K562 (cell line): ENCODE measurements at regions of chr2 and their contacts with region 1.

Region 1: DNA sequence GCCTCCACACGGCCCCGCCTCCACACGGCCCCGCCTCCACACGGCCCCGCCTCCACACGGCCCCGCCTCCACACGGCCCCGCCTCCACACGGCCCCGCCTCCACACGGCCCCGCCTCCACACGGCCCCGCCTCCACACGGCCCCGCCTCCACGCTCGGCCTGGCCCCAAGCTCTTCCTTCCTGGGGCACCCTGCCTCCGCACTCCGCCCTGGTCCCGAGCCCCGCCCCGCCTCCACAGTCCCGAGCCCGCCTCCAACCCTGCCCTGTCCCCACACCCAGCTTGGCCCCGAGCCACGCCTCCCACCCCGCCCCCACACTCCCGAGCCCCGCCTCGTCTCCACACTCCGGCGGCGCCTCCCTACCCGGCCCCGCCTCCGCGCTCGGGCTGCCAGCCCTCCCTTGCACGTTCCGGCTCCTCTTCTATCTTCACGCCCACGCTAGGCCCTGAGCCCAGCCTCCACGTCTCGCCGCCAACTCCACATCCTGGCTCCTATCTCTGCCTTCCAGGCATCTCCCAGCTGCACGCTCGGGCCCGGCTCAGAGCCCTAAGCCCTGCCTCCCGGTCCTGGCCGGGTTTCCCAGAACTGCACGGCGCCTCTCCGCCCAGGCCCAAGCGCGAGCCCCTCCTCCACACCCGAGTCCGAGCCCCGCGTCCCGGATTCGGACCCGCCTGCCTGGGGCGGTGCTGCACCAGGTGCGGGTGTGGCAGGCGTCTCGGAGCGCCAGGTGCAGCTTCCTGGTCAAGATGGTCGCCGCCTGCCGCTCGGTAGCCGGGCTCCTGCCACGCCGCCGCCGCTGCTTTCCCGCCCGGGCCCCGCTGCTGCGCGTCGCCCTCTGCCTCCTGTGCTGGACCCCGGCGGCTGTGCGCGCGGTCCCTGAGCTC is at the start of gene TMEM87B:
- DNase-seq: peak; percentile 90 to 99 (median 92)
- ATAC-seq: peak; percentile 84
- H3K4me3 ChIP-seq: peak within 1 kb of the TSS; percentile 68
- H3K27ac ChIP-seq: peak within 1 kb of the TSS; percentile 91
- H3K4me1 ChIP-seq: peaks cover 14 to 26% of the 10 kb centered on the region in 2 experiments; a peak in 4 of 5 replicates
- H3K27me3 ChIP-seq: no peaks in the 10 kb centered on the region
- CTCF ChIP-seq: no peak
- EP300 ChIP-seq: peak; percentile 86
- POLR2A ChIP-seq: peak; percentile 79
- RAD21 ChIP-seq: peak in 1 of 2 experiments; percentile 25; a peak in 1 of 4 replicates
- polyA plus RNA-seq, gene TMEM87B: 3.7 to 5.8 TPM

Region 2: DNA sequence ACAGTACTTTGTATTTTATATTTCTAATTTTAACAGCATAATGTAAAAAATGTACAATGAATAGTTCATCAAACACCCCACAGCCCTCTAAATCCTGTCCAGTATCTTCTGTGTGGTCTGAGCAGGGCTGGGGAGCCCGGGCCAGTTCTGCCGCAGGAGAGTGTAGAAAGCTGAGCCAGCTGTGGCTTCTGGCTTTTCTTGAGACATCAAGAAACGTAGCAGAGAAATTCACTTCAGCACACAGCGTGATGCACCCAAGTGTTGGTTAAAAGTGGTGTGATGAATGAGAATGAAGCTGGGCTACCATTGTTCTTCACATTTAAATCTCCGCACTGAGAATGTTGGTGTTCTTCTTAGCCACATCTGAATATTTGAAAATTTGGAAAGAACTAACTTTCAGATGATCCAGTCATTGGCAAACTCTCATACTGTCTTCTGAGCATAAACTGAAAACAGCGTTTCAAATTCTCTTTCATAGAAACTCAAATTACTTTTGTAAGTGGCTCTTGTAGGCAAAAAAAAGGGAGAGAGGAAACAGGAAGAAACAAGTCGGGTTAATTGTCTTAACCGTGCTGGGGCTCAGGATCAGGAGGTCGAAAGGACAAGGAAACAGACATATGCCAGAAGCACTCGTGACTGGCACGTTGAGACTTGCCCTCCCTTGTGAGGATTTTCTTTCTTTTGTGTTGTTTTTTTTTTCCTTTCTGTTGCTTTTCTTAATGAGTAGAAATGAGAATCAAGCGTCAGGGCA is 23.4 kb before region 1 on chr2:
- CTCF ChIA-PET with region 1: no interaction called
- POLR2A ChIA-PET with region 1: no interaction called
- in situ Hi-C with region 1: no loop called
- intact Hi-C with region 1: no loop called
- DNase-seq: no peak
- ATAC-seq: peak; percentile 52; the same call in 2 of the 3 replicates
- H3K4me3 ChIP-seq: no peak overlapping the region
- H3K27ac ChIP-seq: no peak overlapping the region
- H3K4me1 ChIP-seq: peaks cover 0 to 3% of the 10 kb centered on the region in 2 experiments; a peak in 2 of 5 replicates
- H3K27me3 ChIP-seq: no peaks in the 10 kb centered on the region; a peak in 1 of 5 replicates
- CTCF ChIP-seq: no peak
- EP300 ChIP-seq: no peak
- POLR2A ChIP-seq: no peak
- RAD21 ChIP-seq: no peak

Region 3: DNA sequence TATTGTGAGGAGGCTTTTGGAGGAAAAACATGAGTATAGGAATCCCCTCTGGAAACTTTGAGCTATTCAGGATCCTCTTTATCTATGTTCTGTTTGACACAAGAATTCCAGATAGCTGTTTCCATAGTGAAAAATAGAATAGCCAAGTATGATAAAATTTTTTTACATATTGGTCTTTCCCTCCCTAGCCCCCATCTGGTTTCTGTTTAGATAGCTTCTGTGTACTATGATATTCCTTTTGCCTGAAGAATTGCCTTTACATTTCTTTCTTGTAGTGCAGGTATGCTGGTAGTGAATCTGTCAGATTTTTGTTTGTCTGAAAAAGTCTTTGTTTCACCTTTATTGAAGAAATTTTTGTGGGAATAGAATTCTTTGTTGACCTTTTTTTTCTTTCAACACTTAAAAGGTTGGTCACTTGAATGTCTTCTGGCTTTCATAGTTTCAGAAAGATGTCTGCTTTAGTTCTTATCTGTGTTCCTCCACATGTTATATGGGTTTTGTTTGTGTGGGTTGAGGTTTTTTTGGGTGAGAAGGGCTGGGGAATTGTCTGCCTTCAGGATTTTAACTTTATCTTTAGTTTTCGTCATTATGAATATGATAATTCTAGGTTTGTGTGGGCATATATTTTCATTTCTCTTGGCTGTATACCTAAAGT is 53.2 kb after region 1 on chr2:
- CTCF ChIA-PET with region 1: no interaction called
- POLR2A ChIA-PET with region 1: no interaction called
- in situ Hi-C with region 1: no loop called
- intact Hi-C with region 1: loop called (anchors 5 kb)
- DNase-seq: peak; percentile 25 to 60 (median 44)
- ATAC-seq: peak; percentile 36; the same call in 1 of the 3 replicates
- H3K4me3 ChIP-seq: no peak overlapping the region
- H3K27ac ChIP-seq: peak overlapping the region; percentile 31; the same call in 1 of the 3 replicates
- H3K4me1 ChIP-seq: no peaks in the 10 kb centered on the region
- H3K27me3 ChIP-seq: no peaks in the 10 kb centered on the region
- CTCF ChIP-seq: no peak
- EP300 ChIP-seq: peak; percentile 54; the same call in 1 of the 2 replicates
- POLR2A ChIP-seq: no peak
- RAD21 ChIP-seq: no peak

Region 4: GRCh38 chr2:112121682-112122254 is 66.7 kb after region 1 on chr2:
- CTCF ChIA-PET with region 1: interaction called, 3 read pairs
- POLR2A ChIA-PET with region 1: no interaction called
- in situ Hi-C with region 1: no loop called
- intact Hi-C with region 1: loop called (anchors 5 kb)
- DNase-seq: peak in 1 of 4 experiments; percentile 55
- ATAC-seq: no peak; the same call in 2 of the 3 replicates
- H3K4me3 ChIP-seq: no peak overlapping the region
- H3K27ac ChIP-seq: no peak overlapping the region
- H3K4me1 ChIP-seq: no peaks in the 10 kb centered on the region
- H3K27me3 ChIP-seq: no peaks in the 10 kb centered on the region
- CTCF ChIP-seq: peak; percentile 43 to 78 (median 44); a peak in 4 of 6 replicates
- EP300 ChIP-seq: no peak
- POLR2A ChIP-seq: no peak
- RAD21 ChIP-seq: peak; percentile 73 to 80